Colonic mucosa (tissue), 4 donors: ENCODE measurements at regions of chr5 and their contacts with region 1.

Region 1: GRCh38 chr5:52787600-52788504 is at the starts of genes ITGA1 and PELO:
- DNase-seq: peak; percentile 86
- H3K4me3 ChIP-seq: peak within 1 kb of the TSS; percentile 74
- H3K27ac ChIP-seq: peak within 1 kb of the TSS; percentile 97
- H3K4me1 ChIP-seq: peaks cover 4% of the 10 kb centered on the region
- H3K27me3 ChIP-seq: no peaks in the 10 kb centered on the region
- CTCF ChIP-seq: peak; percentile 30
- total RNA-seq, gene ITGA1: 19.2 to 52.5 TPM
- total RNA-seq, gene PELO: 15.2 to 24.7 TPM

Region 2: GRCh38 chr5:52915176-52915875 is 127.5 kb after region 1 on chr5:
- intact Hi-C with region 1: loop called (anchors 2 kb)
- DNase-seq: peak; percentile 57
- H3K4me3 ChIP-seq: no peak overlapping the region
- H3K27ac ChIP-seq: no peak overlapping the region
- H3K4me1 ChIP-seq: no peaks in the 10 kb centered on the region
- H3K27me3 ChIP-seq: no peaks in the 10 kb centered on the region
- CTCF ChIP-seq: peak; percentile 77

Region 3: DNA sequence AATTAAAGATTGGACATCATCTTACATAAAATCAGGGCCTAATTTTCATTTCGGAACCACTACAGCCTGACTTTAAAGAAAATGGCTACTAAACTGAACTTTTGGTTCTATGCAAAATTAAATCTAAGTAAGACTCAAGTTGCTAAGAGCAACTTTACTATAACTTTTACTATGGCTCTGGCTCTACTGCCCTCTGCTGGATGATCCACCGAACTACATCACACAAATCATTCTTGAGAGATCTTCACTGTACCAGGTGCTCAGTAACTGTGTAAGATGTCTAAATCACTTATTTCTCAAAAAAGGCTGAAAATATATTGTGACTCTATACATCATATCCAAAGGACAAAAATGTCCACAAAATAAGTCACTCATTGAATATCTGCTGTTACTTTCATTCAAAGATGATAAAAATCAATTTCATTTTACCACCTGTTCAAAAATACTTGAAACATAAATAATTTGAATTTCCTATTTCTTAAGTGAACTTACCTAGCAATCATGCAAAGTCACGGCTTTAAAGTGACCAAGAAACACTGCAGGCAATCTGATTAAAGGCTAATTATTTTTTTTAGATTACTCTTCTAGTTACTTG is 308.2 kb after region 1 on chr5:
- intact Hi-C with region 1: loop called (anchors 10 kb)
- DNase-seq: peak; percentile 74
- H3K4me3 ChIP-seq: no peak overlapping the region
- H3K27ac ChIP-seq: no peak overlapping the region
- H3K4me1 ChIP-seq: no peaks in the 10 kb centered on the region
- H3K27me3 ChIP-seq: no peaks in the 10 kb centered on the region
- CTCF ChIP-seq: peak; percentile 83